ENCODE measurements at regions of chr19 and their contacts with region 1.

Region 1: DNA sequence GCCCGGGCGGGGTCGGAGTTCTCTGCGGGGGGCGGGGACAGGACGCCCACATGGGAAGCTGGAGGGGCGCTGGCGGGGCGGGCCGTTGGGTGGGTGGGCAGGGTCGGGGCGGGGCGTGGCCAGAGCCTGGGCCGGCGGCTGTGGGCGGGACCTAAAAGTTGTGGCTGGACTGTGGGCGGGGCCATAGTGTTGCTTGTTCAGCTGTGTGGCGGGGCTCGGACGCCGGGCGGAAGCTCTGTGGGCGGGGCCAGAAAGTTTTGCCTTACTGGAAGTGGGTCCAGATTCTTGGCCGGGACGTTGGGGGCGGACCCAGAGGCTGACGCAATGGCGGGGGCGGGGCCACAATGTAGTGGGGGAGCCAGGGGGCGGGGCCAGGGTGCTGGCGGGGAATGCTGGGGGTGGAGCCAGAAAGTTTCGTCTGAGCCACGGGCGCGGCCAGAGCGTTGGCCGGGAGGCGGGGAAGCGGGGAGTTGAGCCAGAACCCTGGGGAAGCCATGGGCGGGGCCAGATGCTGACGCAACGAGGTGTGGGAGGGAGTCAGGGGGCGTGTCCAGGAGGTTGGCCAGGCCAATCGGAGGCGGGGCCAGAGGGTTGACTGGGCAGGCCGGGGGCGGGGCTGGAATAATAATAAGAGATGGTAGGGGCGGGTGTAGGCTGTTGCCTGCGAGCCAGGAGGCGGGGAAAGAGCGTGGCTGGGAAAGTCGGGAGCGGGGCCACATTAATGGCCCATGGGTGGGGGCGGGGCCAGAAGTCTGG is 541 bp downstream of the CCDC9 start:
- DNase-seq: peak; percentile 100
- H3K4me3 Mint-ChIP-seq: peak overlapping the region; percentile 85
- H3K27ac Mint-ChIP-seq: peak overlapping the region; percentile 100
- H3K4me1 Mint-ChIP-seq: peaks cover 37% of the 10 kb centered on the region
- H3K27me3 Mint-ChIP-seq: no peaks in the 10 kb centered on the region
- CTCF ChIP-seq: no peak

Region 2: GRCh38 chr19:47039239-47039874 is 217.5 kb before region 1 on chr19:
- CTCF ChIA-PET with region 1: no interaction called
- intact Hi-C with region 1: no loop called
- DNase-seq: no peak
- H3K4me3 Mint-ChIP-seq: no peak overlapping the region
- H3K27ac Mint-ChIP-seq: no peak overlapping the region
- H3K4me1 Mint-ChIP-seq: peaks cover 16% of the 10 kb centered on the region
- H3K27me3 Mint-ChIP-seq: no peaks in the 10 kb centered on the region
- CTCF ChIP-seq: no peak

Region 3: DNA sequence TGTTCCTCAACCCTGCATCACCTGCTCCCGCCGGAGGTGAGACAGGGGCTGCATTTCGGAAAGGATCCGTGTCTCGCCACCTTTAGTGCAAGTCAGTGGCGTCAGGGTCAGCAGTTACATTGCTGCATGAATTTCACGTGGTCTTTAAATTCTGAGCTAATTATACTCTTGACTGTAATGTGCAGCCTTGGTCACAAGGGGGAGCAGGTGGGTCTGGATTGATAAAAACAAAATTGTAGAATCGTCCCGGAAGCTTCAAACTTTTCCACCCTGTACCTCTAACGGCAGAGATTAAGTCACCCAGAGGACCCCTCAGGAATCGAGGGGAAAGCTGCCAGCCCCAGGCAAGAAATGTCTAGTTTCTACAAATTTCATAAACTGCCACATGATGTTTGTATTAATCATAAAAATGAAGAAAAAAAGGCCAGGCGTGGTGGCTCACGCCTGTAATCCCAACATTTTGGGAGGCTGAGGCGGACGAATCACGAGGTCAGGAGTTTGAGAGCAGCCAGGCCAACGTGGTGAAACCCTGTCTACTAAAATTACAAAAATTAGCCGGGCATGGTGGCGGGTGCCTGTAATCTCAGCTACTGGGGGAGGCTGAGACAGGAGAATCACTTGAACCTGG is 46.1 kb before region 1 on chr19:
- CTCF ChIA-PET with region 1: interaction called, 11 read pairs
- intact Hi-C with region 1: no loop called
- DNase-seq: peak; percentile 88
- H3K4me3 Mint-ChIP-seq: peak overlapping the region; percentile 18
- H3K27ac Mint-ChIP-seq: peak overlapping the region; percentile 95
- H3K4me1 Mint-ChIP-seq: peaks cover 11% of the 10 kb centered on the region
- H3K27me3 Mint-ChIP-seq: no peaks in the 10 kb centered on the region
- CTCF ChIP-seq: peak; percentile 88

Region 4: DNA sequence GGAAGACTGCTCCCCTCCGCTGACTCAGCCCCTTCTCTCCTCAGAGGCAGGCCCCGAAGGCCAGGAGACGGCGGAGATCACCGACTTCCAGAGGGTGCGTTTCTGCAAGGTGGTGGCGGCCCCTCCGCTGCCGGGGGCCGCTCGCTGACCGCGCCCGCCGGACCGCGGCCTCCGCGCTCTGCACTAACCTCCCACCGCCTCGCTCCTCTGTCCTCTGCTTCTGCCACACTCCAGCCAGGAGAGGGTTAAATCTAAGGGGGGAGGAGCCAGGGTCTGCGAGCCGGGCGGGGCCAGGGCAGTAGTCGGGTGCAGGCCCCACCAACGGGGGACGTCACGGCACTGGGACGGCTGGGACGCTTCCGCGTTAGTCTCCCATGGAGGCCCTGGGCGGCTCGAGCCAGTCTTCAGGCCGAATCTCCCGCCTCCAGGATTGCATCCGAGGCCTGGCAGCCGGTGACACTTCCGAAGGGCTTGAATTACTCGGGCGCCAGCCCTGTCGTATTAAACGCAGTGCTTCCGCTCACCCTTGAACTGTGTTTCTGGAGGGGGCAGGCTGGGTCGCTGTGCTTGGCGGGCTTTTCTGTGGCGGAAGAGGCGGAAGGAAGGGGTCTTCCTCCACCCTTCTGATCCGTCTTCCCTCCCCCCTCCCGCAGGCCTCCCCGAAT is 16.6 kb after region 1 on chr19:
- CTCF ChIA-PET with region 1: interaction called, 10 read pairs
- intact Hi-C with region 1: loop called (anchors 2 kb)
- DNase-seq: peak; percentile 97
- H3K4me3 Mint-ChIP-seq: peak overlapping the region; percentile 94
- H3K27ac Mint-ChIP-seq: peak overlapping the region; percentile 95
- H3K4me1 Mint-ChIP-seq: peaks cover 19% of the 10 kb centered on the region
- H3K27me3 Mint-ChIP-seq: no peaks in the 10 kb centered on the region
- CTCF ChIP-seq: no peak

Region 5: DNA sequence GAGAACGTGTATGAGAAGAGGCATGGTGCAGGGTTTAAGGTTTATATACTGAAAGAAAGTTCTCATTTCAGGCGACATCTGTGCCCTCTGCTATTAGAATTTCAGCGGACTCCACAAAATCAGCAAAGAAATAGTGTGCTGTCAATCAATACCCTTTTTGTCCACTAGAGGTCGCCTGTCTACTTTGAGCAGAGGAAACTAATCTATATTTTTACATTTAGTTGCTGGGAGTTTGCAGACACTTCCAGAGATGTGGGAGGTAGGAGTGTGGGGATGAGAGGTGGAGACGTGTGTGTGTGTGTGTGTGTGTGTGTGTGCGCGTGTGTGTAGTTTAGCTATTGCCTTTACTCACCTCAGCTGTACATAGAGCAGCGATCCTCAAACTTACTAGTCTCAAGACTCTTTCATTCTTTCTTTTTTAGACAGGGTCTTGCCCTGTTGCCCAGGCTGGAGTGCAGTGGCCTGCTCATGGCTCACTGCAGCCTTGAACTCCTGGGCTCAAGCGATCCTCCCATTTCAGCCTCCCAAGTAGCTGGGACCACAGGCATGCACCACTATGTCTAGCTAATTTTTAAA is 27.5 kb after region 1 on chr19:
- CTCF ChIA-PET with region 1: no interaction called
- intact Hi-C with region 1: no loop called
- DNase-seq: peak; percentile 75
- H3K4me3 Mint-ChIP-seq: no peak overlapping the region
- H3K27ac Mint-ChIP-seq: no peak overlapping the region
- H3K4me1 Mint-ChIP-seq: peaks cover 21% of the 10 kb centered on the region
- H3K27me3 Mint-ChIP-seq: no peaks in the 10 kb centered on the region
- CTCF ChIP-seq: peak; percentile 59

Region 6: DNA sequence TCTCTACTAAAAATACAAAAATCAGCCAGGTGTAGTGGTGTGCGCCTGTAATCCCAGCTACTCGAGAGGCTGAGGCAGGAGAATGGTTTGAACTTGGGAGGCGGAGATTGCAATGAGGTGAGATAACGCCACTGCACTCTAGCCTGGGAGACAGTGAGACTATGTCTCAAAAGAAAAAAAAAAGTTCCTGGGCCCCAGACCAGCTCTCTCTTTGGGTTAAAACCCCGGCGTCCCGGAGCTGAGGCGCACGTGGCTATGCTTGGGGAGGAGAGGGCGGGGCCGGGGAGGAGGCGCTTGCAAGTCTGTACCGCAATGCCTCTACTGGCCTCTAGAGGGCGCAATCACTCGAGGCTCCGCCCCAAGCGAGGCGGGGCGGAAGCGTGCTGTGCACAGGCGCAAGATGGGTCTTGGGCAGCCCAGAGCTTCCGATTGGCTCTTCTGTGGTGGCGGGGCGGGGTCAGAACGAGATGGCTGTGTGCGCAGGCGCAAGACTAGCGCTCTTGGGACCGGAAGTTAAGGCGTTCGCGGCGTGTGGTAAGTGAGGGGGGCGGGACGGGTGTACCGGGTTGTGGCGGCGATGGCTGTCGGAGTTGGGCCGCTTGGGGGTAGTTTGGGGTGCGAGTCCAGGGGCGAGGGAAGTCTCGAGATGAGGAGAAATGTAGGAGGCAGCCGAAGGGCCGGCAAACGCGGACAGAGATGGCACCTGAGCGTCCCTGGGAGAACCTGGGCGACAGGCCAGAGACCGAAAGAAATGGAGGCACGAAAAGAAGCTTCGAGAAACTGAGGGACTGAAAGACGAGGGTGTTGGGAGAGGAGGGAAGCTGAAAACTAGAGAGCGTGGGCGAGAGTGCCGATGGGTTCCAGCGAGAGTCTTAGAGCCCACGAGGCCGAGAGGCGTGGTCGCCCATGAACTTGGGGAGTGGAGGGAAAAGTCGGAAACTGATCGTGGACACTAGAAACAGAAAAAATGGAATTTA is 92.2 kb after region 1 on chr19 and contains the start of gene DHX34:
- CTCF ChIA-PET with region 1: interaction called, 10 read pairs
- intact Hi-C with region 1: no loop called
- DNase-seq: peak; percentile 99
- H3K4me3 Mint-ChIP-seq: peak within 1 kb of the TSS; percentile 80
- H3K27ac Mint-ChIP-seq: peak within 1 kb of the TSS; percentile 71
- H3K4me1 Mint-ChIP-seq: peaks cover 36% of the 10 kb centered on the region
- H3K27me3 Mint-ChIP-seq: no peaks in the 10 kb centered on the region
- CTCF ChIP-seq: peak; percentile 98
- total RNA-seq, gene DHX34: 51.4 and 51.6 TPM in 2 replicates

Measured in Calu3 (cell line).